CD14-positive monocyte (primary cell): ENCODE measurements at regions of chr1 and their contacts with region 1.

Region 1: DNA sequence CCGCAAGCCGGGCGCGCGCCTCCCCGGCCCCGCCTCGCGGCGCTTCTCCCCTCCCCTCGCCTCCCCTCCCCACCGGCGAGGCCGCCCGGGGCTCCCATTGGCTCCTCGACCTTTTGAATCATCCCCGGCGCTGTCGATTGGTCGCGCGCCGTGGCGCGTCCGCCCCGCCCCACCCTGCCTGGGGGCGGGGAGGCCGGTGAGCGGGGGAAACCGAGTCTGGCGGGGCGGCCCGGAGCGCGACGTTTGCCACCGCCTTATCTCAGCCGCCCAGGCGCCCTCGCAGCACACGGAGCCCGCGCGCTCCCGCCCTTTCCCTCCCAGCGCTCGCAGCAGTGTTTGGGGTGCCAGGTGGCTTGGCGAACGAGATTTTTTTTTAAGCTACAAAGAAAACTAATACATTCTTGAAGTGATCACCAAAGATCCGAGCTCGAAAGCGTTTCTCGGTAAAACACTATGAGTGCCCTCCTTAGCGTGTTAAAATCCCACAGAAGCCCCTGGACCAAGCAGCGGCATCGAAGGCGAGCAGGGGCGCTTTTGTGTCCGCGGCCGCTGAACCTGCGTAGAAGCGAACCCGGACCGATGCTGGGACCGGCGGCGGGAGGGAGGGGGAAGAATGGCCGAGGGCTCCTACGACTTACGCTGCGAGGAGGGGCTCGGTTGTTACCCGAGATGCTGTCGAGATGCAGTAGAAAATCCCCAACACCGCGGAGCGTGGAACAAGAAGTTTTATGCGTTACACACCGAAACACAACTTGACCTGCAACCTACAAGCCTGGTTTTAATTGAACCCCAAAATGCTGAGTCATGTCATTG is 436 bp upstream of the LBR start:
- DNase-seq: peak; percentile 85 to 87 (median 85)
- H3K4me3 ChIP-seq: peak overlapping the region; percentile 61 to 92 (median 87)
- H3K4me3 Mint-ChIP-seq: peak overlapping the region; percentile 86 to 93
- H3K27ac ChIP-seq: peak overlapping the region; percentile 82 to 83
- H3K27ac Mint-ChIP-seq: peak overlapping the region; percentile 86 to 95 (median 94)
- H3K4me1 ChIP-seq: peaks cover 43 to 54% of the 10 kb centered on the region in 2 donors
- H3K4me1 Mint-ChIP-seq: peaks cover 51% of the 10 kb centered on the region
- H3K27me3 ChIP-seq: no peaks in the 10 kb centered on the region
- H3K27me3 Mint-ChIP-seq: peaks cover 0 to 7% (median 0%) of the 10 kb centered on the region in 3 donors
- CTCF ChIP-seq: no peak

Region 2: DNA sequence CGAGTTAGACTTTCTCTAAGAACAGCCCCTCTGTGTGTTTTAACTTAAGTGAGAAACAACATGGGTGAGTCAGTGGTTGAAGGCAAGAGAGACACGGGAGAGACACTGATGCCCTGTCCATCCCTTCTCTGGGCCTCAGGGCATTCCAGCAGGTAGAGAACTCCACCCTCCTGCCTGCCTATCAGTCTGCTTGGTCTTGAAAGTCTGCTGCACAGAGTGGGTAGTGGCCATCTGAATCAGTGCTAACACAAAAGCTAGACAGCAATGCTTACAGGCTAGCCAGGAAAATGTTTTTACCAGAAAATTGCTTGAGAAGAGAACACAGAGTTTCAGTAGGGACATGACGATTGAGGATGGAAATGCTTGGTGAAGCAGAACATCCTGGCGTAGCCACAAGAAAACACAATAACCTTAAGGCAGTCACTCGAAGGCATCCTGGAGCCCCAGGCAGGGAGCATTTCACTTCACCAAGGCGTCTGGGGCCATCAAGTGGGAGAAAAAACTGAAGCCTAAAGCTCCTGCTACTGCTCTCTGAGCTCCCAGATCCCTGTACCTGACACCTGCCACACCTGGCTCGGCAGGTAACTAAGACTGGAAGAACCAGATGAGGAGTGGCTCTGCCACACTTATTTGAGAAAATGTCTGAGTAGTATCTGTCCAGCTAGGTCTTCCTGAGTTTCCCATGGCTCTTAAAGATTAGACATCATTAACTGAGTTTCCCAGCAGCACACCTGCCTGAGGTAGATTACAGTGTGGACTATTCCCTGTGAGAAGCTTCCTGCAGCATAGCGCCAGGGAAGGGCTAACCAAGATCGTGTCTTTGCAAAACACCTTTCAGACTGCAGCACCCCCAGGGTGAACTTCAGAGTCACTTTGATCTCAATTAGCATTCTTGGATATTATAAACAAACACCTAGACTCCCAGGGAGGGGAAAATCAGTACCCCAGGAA is 17.6 kb after region 1 on chr1:
- intact Hi-C with region 1: loop called in 1 of 2 experiments (anchors 2 kb)
- DNase-seq: peak in 1 of 3 donors; percentile 25
- H3K4me3 ChIP-seq: peak overlapping the region in 1 of 3 experiments; percentile 66
- H3K4me3 Mint-ChIP-seq: peak overlapping the region; percentile 34 to 83
- H3K27ac ChIP-seq: peak overlapping the region; percentile 69 to 76
- H3K27ac Mint-ChIP-seq: peak overlapping the region; percentile 91 to 98 (median 96)
- H3K4me1 ChIP-seq: peaks cover 78 to 89% of the 10 kb centered on the region in 2 donors
- H3K4me1 Mint-ChIP-seq: peaks cover 86% of the 10 kb centered on the region
- H3K27me3 ChIP-seq: no peaks in the 10 kb centered on the region
- H3K27me3 Mint-ChIP-seq: peaks cover 0 to 4% (median 0%) of the 10 kb centered on the region in 3 donors
- CTCF ChIP-seq: no peak

Region 3: GRCh38 chr1:225467193-225468020 is 39.1 kb after region 1 on chr1:
- intact Hi-C with region 1: loop called in 1 of 2 experiments (anchors 5 kb)
- DNase-seq: peak; percentile 88 to 91 (median 88)
- H3K4me3 ChIP-seq: peak overlapping the region; percentile 59 to 92 (median 66)
- H3K4me3 Mint-ChIP-seq: peak overlapping the region; percentile 85 to 89
- H3K27ac ChIP-seq: peak overlapping the region; percentile 97 to 100
- H3K27ac Mint-ChIP-seq: peak overlapping the region; percentile 95 to 98 (median 98)
- H3K4me1 ChIP-seq: peaks cover 27 to 36% of the 10 kb centered on the region in 2 donors
- H3K4me1 Mint-ChIP-seq: peaks cover 37% of the 10 kb centered on the region
- H3K27me3 ChIP-seq: no peaks in the 10 kb centered on the region
- H3K27me3 Mint-ChIP-seq: no peaks in the 10 kb centered on the region
- CTCF ChIP-seq: no peak

Region 4: DNA sequence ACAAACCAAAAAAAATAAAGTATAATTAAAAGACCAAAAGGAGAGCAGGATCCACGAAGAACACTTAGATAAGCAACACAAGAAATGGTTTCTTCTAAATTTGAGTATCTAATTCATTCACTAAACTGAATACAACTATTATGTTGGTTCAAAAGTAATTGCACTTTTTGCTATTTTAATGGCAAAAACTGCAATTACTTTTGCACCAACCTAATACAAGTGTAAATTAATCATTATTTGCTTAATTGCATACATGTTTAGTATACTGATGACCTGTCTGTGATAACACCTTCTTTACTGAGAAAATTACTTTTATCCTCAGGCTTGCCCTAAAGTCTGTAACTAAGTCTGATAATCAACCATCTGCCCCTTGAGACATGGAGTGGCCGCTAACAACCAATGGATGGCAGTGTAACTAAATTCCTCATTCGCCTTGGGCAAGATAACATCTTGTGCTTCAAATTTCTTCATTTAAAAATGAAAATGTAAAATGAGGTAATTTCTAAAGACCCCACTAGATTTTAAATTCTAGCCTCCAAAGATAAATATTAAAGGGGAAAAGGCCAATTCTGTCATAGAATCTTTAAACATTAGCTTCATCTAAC is 139.4 kb after region 1 on chr1:
- intact Hi-C with region 1: no loop called
- DNase-seq: no peak
- H3K4me3 ChIP-seq: no peak overlapping the region
- H3K4me3 Mint-ChIP-seq: no peak overlapping the region
- H3K27ac ChIP-seq: no peak overlapping the region
- H3K27ac Mint-ChIP-seq: no peak overlapping the region
- H3K4me1 ChIP-seq: peaks cover 0 to 2% of the 10 kb centered on the region in 2 donors
- H3K4me1 Mint-ChIP-seq: peaks cover 6% of the 10 kb centered on the region
- H3K27me3 ChIP-seq: no peaks in the 10 kb centered on the region
- H3K27me3 Mint-ChIP-seq: no peaks in the 10 kb centered on the region
- CTCF ChIP-seq: no peak

Region 5: DNA sequence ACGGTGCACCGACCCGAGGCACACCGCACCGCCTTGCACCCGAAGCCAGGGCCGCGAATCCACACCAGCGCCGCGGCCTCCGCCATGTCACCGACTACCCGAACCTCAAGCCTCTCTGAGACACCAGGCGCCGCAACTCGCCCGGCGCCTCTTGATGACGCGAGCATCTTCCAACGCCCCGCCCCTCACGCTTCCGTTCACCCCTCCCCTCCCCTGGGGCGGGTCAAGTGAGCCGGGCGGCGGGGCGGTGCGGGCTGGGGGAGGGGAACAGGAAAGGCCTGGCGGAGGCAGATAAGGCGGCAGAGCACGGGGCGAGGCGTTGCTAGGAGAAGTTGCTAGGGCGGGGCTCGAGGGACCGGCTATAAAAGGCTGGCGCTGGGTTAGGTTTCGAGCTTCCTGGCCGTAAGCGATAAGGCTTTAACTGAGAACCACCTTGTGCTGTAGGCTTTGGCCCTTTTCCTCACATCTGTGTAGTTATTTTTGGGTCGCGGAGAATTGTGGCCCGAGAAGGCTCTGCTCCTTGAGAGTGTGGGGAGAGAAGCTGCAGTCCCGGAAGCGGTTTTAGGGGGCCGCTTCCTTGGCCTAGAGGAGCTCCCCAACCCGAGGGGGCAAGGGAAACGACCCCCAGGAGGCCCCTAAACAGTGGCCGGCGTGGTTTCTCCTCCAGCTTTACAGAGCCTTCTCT is 571.1 kb after region 1 on chr1 and contains the start of gene SDE2:
- intact Hi-C with region 1: loop called in 1 of 2 experiments (anchors 5 kb)
- DNase-seq: peak; percentile 99 to 100 (median 99)
- H3K4me3 ChIP-seq: peak within 1 kb of the TSS; percentile 69 to 95 (median 87)
- H3K4me3 Mint-ChIP-seq: peak within 1 kb of the TSS; percentile 100
- H3K27ac ChIP-seq: peak within 1 kb of the TSS; percentile 97 to 98
- H3K27ac Mint-ChIP-seq: peak within 1 kb of the TSS; percentile 99 to 100 (median 100)
- H3K4me1 ChIP-seq: peaks cover 48 to 62% of the 10 kb centered on the region in 2 donors
- H3K4me1 Mint-ChIP-seq: peaks cover 69% of the 10 kb centered on the region
- H3K27me3 ChIP-seq: no peaks in the 10 kb centered on the region
- H3K27me3 Mint-ChIP-seq: peaks cover 0 to 5% (median 2%) of the 10 kb centered on the region in 3 donors
- CTCF ChIP-seq: no peak
- polyA plus RNA-seq, gene SDE2: 6.8 to 18.0 (median 8.4) TPM